ENCODE measurements at regions of chr2 and their contacts with region 1.

Region 1: DNA sequence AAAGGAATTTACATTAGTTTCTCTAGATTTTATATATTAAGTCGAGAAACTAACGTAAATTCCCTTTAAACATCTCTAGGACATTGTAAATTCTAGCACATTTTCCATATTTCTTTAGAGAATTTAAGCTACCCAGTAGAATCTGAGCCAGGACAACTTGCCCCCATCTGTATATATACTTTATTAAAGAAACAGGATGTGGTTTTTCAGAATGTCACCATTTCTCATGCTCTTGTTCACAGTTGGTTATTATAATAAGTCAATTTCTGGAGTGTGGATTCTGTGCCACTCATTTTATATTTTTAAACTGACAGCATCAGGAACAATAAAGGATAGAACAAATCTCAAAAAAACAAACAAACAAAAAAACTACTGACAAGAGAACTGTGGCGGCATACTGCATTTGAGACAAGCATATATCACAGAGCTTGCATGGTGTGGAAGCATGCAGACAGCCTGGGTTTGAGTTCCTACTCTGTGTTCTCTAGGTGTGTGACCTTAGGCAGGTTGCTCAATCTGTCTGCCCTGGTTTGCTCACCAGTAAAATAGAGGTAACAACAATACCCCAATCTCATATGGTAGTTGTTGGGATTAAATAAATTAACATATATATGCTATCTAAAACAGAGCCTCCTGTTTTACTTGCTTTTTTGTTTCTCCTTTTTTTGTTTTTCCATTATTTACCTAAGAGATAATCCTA is 61.4 kb upstream of the DNER start:
- DNase-seq: no peak
- H3K4me3 ChIP-seq: no peak overlapping the region
- H3K27ac ChIP-seq: no peak overlapping the region
- H3K4me1 ChIP-seq: peaks cover 16% of the 10 kb centered on the region
- H3K27me3 ChIP-seq: no peaks in the 10 kb centered on the region
- CTCF ChIP-seq: no peak

Region 2: GRCh38 chr2:229050133-229050532 is 725.6 kb before region 1 on chr2:
- CTCF ChIA-PET with region 1: no interaction called
- dilution Hi-C with region 1: no loop called
- in situ Hi-C with region 1: no loop called
- intact Hi-C with region 1: no loop called
- DNase-seq: no peak
- H3K4me3 ChIP-seq: no peak overlapping the region
- H3K27ac ChIP-seq: no peak overlapping the region
- H3K4me1 ChIP-seq: no peaks in the 10 kb centered on the region
- H3K27me3 ChIP-seq: no peaks in the 10 kb centered on the region
- CTCF ChIP-seq: no peak

Region 3: GRCh38 chr2:229825476-229825875 is 49.7 kb after region 1 on chr2:
- CTCF ChIA-PET with region 1: no interaction called
- dilution Hi-C with region 1: no loop called
- in situ Hi-C with region 1: no loop called
- intact Hi-C with region 1: loop called (anchors 1 kb)
- DNase-seq: no peak
- H3K4me3 ChIP-seq: no peak overlapping the region
- H3K27ac ChIP-seq: no peak overlapping the region
- H3K4me1 ChIP-seq: peaks cover 8% of the 10 kb centered on the region
- H3K27me3 ChIP-seq: no peaks in the 10 kb centered on the region
- CTCF ChIP-seq: peak; percentile 3 to 9